Panc1 (cell line): ENCODE measurements at regions of chr17 and their contacts with region 1.

Region 1: GRCh38 chr17:81142301-81143199 is 22.8 kb upstream of the PVALEF start:
- DNase-seq: peak; percentile 27
- ATAC-seq: peak; percentile 99
- H3K4me3 ChIP-seq: no peak overlapping the region
- H3K27ac ChIP-seq: no peak overlapping the region
- H3K4me1 ChIP-seq: no peaks in the 10 kb centered on the region; the same call in 1 of the 2 replicates
- H3K27me3 ChIP-seq: no peaks in the 10 kb centered on the region
- CTCF ChIP-seq: peak; percentile 90

Region 2: DNA sequence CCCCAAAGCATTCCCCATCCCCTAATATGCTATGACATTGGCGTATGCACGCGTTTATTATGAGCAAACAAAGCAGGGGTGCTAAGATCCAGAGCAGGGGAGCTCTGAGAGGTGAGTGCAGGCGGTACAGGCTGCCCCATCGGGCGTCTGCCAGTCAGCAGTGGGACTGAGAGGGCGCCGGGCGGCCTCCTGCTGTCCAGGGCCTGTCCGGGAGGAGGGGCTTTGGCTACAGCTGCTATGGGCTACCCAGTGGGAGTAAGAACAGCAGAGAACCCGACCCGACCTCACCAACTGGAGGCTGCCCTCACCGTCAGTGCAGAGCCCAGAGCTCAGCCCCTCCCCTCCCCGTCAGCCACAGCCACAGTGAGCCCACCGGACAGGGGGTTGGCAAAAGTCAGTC is 42.0 kb after region 1 on chr17:
- CTCF ChIA-PET with region 1: interaction called, 3 read pairs
- POLR2A ChIA-PET with region 1: no interaction called
- in situ Hi-C with region 1: no loop called
- intact Hi-C with region 1: loop called (anchors 5 kb)
- DNase-seq: no peak
- ATAC-seq: peak; percentile 15; the same call in 1 of the 2 replicates
- H3K4me3 ChIP-seq: no peak overlapping the region
- H3K27ac ChIP-seq: no peak overlapping the region
- H3K4me1 ChIP-seq: no peaks in the 10 kb centered on the region; the same call in 1 of the 2 replicates
- H3K27me3 ChIP-seq: no peaks in the 10 kb centered on the region
- CTCF ChIP-seq: no peak

Region 3: GRCh38 chr17:81200695-81201580 is 58.4 kb after region 1 on chr17:
- CTCF ChIA-PET with region 1: interaction called, 4 read pairs
- POLR2A ChIA-PET with region 1: interaction called, 6 read pairs
- in situ Hi-C with region 1: loop called (anchors 5 kb)
- intact Hi-C with region 1: loop called (anchors 5 kb)
- DNase-seq: peak; percentile 7
- ATAC-seq: peak; percentile 89
- H3K4me3 ChIP-seq: no peak overlapping the region
- H3K27ac ChIP-seq: no peak overlapping the region
- H3K4me1 ChIP-seq: no peaks in the 10 kb centered on the region
- H3K27me3 ChIP-seq: no peaks in the 10 kb centered on the region
- CTCF ChIP-seq: peak; percentile 79; the same call in 1 of the 2 replicates

Region 4: GRCh38 chr17:81207610-81208581 is 65.3 kb after region 1 on chr17:
- CTCF ChIA-PET with region 1: no interaction called
- POLR2A ChIA-PET with region 1: no interaction called
- in situ Hi-C with region 1: loop called (anchors 5 kb)
- intact Hi-C with region 1: loop called (anchors 5 kb)
- DNase-seq: no peak
- ATAC-seq: no peak
- H3K4me3 ChIP-seq: no peak overlapping the region
- H3K27ac ChIP-seq: no peak overlapping the region
- H3K4me1 ChIP-seq: no peaks in the 10 kb centered on the region
- H3K27me3 ChIP-seq: no peaks in the 10 kb centered on the region
- CTCF ChIP-seq: no peak

Region 5: GRCh38 chr17:81238817-81239600 is 96.5 kb after region 1 on chr17 and contains the starts of genes NDUFAF8 and TEPSIN:
- CTCF ChIA-PET with region 1: interaction called, 10 read pairs
- POLR2A ChIA-PET with region 1: no interaction called
- in situ Hi-C with region 1: no loop called
- intact Hi-C with region 1: loop called (anchors 2 kb)
- DNase-seq: peak; percentile 96
- ATAC-seq: peak; percentile 94
- H3K4me3 ChIP-seq: peak within 1 kb of the TSS; percentile 76 to 99
- H3K27ac ChIP-seq: peak within 1 kb of the TSS; percentile 93
- H3K4me1 ChIP-seq: peaks cover 40% of the 10 kb centered on the region
- H3K27me3 ChIP-seq: no peaks in the 10 kb centered on the region
- CTCF ChIP-seq: no peak
- total RNA-seq, gene NDUFAF8: 75.8 TPM
- total RNA-seq, gene TEPSIN: 44.9 TPM